Breast epithelium (tissue), 4 donors: ENCODE measurements at regions of chr7 and their contacts with region 1.

Region 1: DNA sequence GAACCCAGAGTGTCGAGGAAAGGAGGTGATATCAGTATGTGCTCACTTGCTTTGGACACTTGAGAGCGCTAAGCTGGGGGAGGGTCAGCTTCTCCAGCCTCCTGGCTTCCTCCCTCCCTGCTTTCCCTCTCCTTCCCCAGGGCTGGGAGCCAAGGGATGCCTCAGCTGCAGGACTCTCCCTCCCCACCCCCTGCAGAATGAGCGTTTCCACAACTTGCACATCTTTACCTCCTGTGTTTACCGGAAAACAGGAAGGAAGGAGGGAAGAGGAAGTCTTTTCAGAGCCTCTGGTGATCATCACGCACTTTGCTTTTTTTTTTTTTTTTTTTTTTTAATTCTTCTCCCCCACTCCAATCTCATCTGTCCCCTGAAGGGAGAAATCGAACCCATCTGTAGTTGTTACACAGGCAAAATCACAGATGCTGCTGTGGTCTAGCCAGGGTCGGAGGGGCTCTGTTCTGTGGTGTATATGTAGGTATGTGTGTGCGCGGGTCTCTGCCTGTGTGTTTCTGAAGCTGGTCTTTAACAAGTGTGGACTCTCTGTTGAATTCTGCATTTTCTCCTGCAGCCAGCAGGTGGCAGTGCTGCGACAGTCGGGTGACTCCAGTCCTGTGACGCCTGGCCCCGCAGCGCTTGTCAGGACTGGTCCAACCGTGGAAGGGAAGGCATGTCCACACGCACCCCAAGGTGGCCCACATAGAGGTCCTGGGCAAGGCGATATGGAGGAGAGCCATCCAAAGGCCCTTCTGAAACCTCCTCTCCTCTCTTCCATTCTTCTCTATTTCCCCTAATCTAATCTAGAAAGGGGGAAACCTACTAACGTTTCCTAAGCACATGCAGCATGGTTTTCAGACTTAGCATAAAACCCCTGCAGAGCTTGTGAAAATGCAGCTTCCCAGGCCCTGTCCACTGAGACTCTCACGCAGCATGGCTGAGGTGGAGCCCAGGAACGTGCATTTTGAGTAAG is 257.6 kb downstream of the PLXNA4 start:
- DNase-seq: peak; percentile 60 to 82
- H3K4me3 ChIP-seq: peak overlapping the region in 1 of 3 donors; percentile 35
- H3K27ac ChIP-seq: no peak overlapping the region
- H3K4me1 ChIP-seq: peaks cover 0 to 7% of the 10 kb centered on the region in 2 donors
- H3K27me3 ChIP-seq: no peaks in the 10 kb centered on the region
- CTCF ChIP-seq: peak; percentile 83 to 89 (median 87)
- POLR2A ChIP-seq: no peak

Region 2: DNA sequence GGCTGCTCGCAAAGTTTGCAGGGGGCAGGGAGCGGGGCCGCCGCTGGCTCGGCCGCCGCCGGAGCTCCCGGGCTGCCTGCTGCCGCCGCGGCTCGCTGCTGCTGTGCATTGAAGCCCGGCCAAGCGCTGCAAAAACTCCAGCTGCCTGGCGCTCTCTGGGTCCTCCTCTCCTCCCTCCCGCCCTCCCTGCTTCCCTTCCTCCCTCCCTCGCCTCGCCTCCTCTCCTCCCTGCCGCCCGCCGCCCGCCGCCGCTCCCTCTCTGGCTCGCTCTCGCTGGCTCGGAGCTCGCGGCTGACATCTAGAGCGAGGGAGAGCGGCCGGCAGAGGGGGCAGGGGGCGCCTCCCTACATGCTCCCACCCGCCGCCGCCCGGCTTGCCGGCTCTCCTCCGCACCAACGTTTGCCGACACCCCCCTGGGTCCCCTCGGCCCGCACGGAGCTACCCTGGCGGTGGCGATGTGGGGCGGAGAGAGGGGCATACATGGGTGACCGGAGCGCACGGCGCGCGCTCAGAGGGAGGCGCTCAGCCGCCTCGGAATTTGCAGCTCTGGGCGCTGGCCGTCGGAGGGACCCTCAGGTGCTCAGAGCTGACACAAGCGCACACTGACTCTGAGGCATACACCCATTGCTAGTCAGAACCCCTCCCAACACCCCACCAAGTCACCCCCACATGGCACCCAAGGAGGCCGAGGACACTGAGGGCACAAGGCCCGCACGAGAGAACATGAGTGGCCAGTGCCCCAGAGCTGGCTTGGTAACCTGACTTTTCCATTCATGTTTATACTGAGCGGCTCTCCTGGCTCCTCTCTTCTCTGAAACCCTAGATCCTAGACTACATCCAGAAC is 258.8 kb after region 1 on chr7:
- intact Hi-C with region 1: loop called (anchors 10 kb)
- DNase-seq: no peak
- H3K4me3 ChIP-seq: peak overlapping the region; percentile 38 to 77 (median 55)
- H3K27ac ChIP-seq: no peak overlapping the region
- H3K4me1 ChIP-seq: no peaks in the 10 kb centered on the region
- H3K27me3 ChIP-seq: peaks cover 0 to 49% of the 10 kb centered on the region in 2 donors
- CTCF ChIP-seq: no peak
- POLR2A ChIP-seq: no peak

Region 3: GRCh38 chr7:132683896-132684686 is 365.5 kb after region 1 on chr7:
- intact Hi-C with region 1: no loop called
- DNase-seq: no peak
- H3K4me3 ChIP-seq: no peak overlapping the region
- H3K27ac ChIP-seq: no peak overlapping the region
- H3K4me1 ChIP-seq: no peaks in the 10 kb centered on the region
- H3K27me3 ChIP-seq: no peaks in the 10 kb centered on the region
- CTCF ChIP-seq: no peak
- POLR2A ChIP-seq: no peak

Region 4: DNA sequence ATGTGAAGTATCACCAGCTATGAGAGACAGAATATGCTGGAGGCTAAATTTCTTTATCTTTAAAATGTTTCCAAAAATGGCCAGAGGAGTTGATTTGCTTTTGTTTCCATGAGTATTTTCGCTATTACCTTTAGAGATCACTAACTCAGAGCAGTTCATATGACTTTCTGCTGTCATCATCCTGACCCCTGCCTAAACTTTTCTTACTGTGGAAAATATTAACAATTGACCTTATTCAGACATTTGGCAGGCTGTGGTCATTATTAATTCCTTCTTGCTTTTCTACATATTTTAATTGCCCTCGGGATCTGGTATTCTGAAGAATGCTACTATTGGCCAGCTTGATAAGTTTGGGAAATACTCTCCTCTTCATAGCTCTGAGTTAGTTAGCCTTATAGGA is 1090.8 kb after region 1 on chr7:
- intact Hi-C with region 1: loop called (anchors 5 kb)
- DNase-seq: no peak
- H3K4me3 ChIP-seq: no peak overlapping the region
- H3K27ac ChIP-seq: no peak overlapping the region
- H3K4me1 ChIP-seq: no peaks in the 10 kb centered on the region
- H3K27me3 ChIP-seq: no peaks in the 10 kb centered on the region
- CTCF ChIP-seq: no peak
- POLR2A ChIP-seq: no peak